HCT116 (cell line): ENCODE measurements at regions of chr12 and their contacts with region 1.

Region 1: DNA sequence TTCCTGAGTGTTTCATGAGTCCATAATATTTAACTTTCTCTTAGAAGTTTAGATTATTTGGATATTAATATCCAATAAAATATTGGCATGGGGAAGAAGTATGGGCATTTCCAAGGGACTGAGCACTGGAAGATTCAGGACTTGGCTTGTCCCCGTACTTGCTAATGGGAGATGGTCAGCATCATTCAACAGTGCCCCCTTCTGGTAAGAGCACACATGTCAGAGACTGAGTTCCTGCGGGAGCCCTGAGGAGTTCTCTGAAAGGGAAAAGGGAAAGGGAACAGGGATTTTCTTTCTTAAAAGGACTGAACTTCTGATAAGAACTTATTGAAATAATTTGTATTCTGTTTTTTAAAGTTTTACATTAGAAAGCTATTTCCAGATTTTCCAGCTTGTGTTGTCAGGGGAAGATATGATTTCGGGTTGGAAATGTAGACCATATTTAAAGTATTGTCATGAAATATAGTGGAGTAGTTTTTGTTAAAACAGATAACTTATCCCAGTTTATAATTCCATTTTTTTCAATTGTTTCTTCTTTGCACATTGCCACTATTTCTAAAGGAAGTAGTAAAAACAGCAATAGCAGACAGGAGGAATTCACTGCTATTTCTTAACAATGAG is 59.8 kb upstream of the C12orf71 start:
- DNase-seq: peak; percentile 60
- ATAC-seq: peak; percentile 98
- H3K4me3 ChIP-seq: no peak overlapping the region
- H3K27ac ChIP-seq: no peak overlapping the region
- H3K4me1 ChIP-seq: no peaks in the 10 kb centered on the region
- H3K27me3 ChIP-seq: no peaks in the 10 kb centered on the region
- CTCF ChIP-seq: peak; percentile 62 to 86 (median 85); a peak in 5 of 6 replicates
- POLR2A ChIP-seq: no peak
- RAD21 ChIP-seq: peak; percentile 75

Region 2: DNA sequence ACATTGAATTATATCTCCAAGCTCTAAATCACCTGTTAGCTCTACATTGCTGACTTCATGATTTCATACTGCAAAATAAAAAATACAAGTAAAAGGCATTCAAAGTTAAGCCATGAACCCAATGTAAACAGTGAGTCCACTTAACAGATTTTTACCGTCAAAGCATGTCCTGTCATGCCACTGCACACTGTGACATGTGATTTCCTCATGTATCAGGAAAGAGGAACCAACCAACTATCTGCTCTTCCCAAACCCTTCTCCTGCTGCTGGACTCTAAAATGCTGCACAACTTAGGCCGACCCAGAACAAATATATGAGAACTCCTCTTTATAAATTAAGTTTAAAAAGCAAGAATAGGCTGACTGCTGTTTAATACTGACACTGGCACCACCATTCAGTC is 165.5 kb before region 1 on chr12:
- CTCF ChIA-PET with region 1: no interaction called
- POLR2A ChIA-PET with region 1: no interaction called
- RAD21 ChIA-PET with region 1: no interaction called
- intact Hi-C with region 1: no loop called
- DNase-seq: no peak
- ATAC-seq: no peak
- H3K4me3 ChIP-seq: no peak overlapping the region
- H3K27ac ChIP-seq: no peak overlapping the region
- H3K4me1 ChIP-seq: no peaks in the 10 kb centered on the region
- H3K27me3 ChIP-seq: no peaks in the 10 kb centered on the region
- CTCF ChIP-seq: no peak
- POLR2A ChIP-seq: no peak
- RAD21 ChIP-seq: no peak

Region 3: GRCh38 chr12:27034607-27035293 is 107.5 kb before region 1 on chr12:
- CTCF ChIA-PET with region 1: no interaction called
- POLR2A ChIA-PET with region 1: no interaction called
- RAD21 ChIA-PET with region 1: no interaction called
- intact Hi-C with region 1: loop called (anchors 1 kb)
- DNase-seq: no peak
- ATAC-seq: no peak
- H3K4me3 ChIP-seq: no peak overlapping the region
- H3K27ac ChIP-seq: no peak overlapping the region
- H3K4me1 ChIP-seq: no peaks in the 10 kb centered on the region
- H3K27me3 ChIP-seq: no peaks in the 10 kb centered on the region
- CTCF ChIP-seq: no peak
- POLR2A ChIP-seq: no peak
- RAD21 ChIP-seq: no peak

Region 4: DNA sequence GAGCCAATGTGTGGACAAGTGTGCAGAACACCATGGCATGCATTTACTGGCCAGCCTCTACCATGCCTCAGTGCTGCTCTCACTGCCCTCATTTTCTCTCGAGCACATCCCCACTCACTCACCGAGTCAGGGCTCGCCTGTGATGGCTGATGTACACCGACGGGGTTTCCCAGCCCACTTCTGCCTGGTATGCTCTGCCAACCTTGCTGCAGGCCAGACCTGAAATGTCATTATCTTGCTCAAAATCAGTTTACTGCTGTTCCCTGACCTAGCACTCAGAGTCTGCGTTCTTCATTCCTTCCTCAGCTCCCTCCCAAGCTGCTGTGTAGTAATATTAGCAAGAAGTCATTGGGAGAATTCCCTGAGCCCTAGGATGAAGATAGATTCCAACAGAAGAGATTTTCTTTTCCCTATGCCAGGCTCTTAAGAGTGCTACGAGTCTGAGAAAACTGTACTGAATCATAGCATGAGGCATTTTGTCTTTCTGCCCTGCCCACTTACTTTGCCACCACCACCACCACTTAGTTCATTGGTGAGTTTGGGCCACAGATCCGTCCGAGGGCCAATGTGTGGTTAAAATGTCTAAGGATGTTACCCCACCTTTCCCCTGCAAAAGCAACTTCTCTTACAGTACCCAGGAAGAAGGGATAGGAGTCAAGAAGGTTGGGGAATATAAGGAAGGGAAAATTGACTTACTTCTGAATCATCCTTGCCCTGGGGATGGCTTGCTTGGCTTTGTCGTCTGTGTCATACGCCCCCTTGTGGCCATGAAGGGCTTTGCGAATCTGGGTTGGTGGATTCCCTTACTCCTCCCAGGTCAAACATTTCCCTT is 241.4 kb after region 1 on chr12:
- CTCF ChIA-PET with region 1: no interaction called
- POLR2A ChIA-PET with region 1: no interaction called
- RAD21 ChIA-PET with region 1: no interaction called
- intact Hi-C with region 1: no loop called
- DNase-seq: peak; percentile 61
- ATAC-seq: peak; percentile 96
- H3K4me3 ChIP-seq: no peak overlapping the region
- H3K27ac ChIP-seq: no peak overlapping the region
- H3K4me1 ChIP-seq: peaks cover 0 to 10% of the 10 kb centered on the region in 2 experiments; a peak in 2 of 4 replicates
- H3K27me3 ChIP-seq: no peaks in the 10 kb centered on the region
- CTCF ChIP-seq: peak; percentile 43 to 94 (median 89); a peak in 5 of 6 replicates
- POLR2A ChIP-seq: no peak
- RAD21 ChIP-seq: peak; percentile 65